ENCODE measurements at regions of chr19 and their contacts with region 1.

Region 1: GRCh38 chr19:5987077-5987818 is 9.3 kb upstream of the RANBP3 start:
- DNase-seq: peak; percentile 77
- ATAC-seq: peak; percentile 70
- H3K4me3 ChIP-seq: no peak overlapping the region
- H3K27ac ChIP-seq: no peak overlapping the region
- H3K4me1 ChIP-seq: peaks cover 19% of the 10 kb centered on the region
- H3K27me3 ChIP-seq: no peaks in the 10 kb centered on the region
- CTCF ChIP-seq: peak; percentile 92
- POLR2A ChIP-seq: no peak
- RAD21 ChIP-seq: peak; percentile 81

Region 2: DNA sequence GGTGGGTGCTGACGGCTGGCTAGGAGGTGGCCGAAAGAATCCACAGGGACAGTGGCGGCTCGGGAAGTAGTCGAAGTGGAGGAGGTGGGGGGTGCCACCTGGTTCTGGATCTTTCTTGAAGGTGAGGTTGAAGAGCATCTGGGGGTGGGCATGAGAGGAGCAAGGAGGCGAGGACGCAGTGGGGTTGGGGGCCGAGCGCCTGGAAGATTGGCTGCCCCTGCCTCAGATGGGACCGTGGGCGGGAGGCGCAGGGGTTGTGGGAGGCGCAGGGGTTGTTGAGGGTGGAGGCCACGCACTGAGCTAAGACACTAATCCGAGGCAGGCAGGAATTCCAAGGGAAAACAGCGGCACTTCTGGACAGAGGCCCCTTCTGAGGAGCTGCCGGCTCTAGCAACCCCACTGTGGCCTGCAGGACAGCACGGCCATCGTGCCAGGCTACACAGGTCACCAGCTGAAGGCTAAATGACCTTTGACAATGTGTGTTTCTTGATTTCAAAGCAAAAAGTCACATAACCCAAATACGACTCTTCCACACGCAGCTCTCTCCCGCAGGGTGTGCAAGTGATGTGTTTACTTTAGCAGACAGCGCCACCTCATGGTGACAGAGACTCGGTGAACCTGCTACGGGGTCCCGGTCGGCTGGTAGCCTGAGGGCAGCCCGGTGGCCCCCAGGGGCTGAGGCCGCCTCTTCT is 34.8 kb after region 1 on chr19:
- CTCF ChIA-PET with region 1: interaction called, 10 read pairs
- POLR2A ChIA-PET with region 1: no interaction called
- dilution Hi-C with region 1: no loop called
- in situ Hi-C with region 1: no loop called
- intact Hi-C with region 1: loop called (anchors 2 kb)
- DNase-seq: peak; percentile 69
- ATAC-seq: peak; percentile 86
- H3K4me3 ChIP-seq: no peak overlapping the region
- H3K27ac ChIP-seq: no peak overlapping the region
- H3K4me1 ChIP-seq: peaks cover 9% of the 10 kb centered on the region
- H3K27me3 ChIP-seq: no peaks in the 10 kb centered on the region
- CTCF ChIP-seq: peak; percentile 67
- POLR2A ChIP-seq: no peak
- RAD21 ChIP-seq: peak; percentile 69

Region 3: DNA sequence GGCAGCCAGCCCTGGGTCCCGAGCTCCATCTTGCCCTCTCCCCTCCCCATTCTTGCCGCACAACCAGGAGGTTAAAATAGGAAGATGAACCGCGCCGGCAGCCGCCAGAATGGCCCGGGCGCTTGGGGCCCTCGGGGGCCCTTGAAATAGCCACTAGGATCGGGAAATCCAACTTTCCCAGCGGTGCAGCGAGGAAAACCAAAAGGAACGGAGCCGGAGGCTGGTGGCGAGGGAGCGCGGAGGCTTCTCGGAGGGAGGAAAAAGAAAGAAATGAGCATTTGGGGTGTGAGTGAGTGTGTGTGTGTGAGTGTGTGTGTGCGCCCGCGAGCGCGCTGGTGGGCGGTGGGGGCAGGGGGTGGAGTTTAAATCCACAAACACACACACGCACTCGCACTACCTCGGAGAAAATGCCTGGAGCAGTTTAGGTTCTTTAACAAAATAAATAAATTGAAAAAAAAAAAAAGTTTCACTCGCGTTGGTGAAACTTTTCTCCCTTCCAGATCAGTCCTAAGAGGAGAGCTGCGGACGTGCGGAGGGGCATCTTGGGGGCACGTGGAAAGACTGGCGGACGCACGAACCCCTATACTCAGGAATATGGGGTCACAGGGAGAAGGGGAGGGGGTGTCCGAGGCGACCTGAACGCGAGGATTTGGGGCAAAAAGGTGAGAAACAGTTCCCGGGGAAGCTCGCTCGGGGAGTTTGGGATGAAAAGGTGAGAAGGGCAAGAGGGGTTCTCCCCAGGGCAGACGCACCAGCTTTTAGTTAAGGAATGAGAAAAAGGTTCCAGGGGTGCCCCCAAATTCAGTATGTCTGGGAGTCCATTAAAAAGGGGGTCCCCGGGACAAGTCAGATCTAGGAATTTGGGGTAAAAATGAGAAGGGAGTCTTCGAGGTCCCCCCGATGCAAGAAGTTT is 121.7 kb after region 1 on chr19:
- CTCF ChIA-PET with region 1: no interaction called
- POLR2A ChIA-PET with region 1: no interaction called
- dilution Hi-C with region 1: no loop called
- in situ Hi-C with region 1: no loop called
- intact Hi-C with region 1: loop called (anchors 5 kb)
- DNase-seq: peak; percentile 66
- ATAC-seq: peak; percentile 4; the same call in 1 of the 2 replicates
- H3K4me3 ChIP-seq: peak overlapping the region; percentile 64
- H3K27ac ChIP-seq: peak overlapping the region; percentile 67
- H3K4me1 ChIP-seq: peaks cover 8% of the 10 kb centered on the region
- H3K27me3 ChIP-seq: no peaks in the 10 kb centered on the region
- CTCF ChIP-seq: no peak
- POLR2A ChIP-seq: peak; percentile 19; the same call in 1 of the 2 replicates
- RAD21 ChIP-seq: no peak; the same call in 1 of the 2 replicates